ENCODE measurements at regions of chr6 and their contacts with region 1.

Region 1: DNA sequence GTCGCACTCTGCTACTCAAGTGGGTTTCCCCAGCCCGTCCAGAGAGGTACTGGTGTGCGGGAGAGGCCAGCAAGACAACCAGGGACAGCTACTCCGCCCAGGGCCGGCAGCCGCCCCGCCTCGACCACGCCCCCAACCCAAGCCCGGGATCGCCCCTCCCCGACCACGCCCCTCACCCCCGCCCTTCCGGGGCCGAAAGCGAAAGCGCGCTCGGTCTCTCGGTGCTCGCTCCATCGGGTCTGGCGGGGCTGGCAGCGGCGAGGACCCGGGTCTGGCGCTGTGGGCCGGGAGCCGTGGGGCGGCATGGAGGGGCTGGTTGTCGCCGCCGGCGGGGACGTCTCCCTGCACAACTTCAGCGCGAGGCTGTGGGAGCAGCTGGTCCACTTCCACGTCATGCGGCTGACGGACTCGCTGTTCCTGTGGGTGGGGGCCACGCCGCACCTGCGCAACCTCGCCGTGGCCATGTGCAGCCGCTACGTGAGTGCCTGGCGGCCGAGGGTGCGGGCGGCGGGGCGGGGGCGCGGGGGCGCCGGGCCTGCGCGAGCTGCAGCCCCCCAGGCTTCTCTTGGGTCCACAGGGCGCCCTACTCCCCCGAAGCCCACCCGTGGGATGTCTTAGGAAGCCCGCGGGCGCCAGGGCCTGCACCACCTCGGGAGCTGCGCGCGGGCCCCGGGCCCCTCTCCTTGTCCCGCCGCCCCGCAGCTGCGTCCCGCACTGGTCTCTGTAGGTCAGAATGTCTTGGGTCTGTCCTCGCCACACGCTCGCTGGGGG is at the start of gene PSMG4:
- DNase-seq: peak; percentile 73 to 84
- ATAC-seq: peak; percentile 85 to 93
- H3K4me3 ChIP-seq: peak within 1 kb of the TSS; percentile 92
- H3K27ac ChIP-seq: peak within 1 kb of the TSS; percentile 91 to 99
- H3K4me1 ChIP-seq: peaks cover 11% of the 10 kb centered on the region
- CTCF ChIP-seq: no peak
- EP300 ChIP-seq: no peak
- POLR2A ChIP-seq: peak; percentile 60
- RAD21 ChIP-seq: no peak
- polyA plus RNA-seq, gene PSMG4: 12.9 and 15.0 TPM in 2 replicates

Region 2: DNA sequence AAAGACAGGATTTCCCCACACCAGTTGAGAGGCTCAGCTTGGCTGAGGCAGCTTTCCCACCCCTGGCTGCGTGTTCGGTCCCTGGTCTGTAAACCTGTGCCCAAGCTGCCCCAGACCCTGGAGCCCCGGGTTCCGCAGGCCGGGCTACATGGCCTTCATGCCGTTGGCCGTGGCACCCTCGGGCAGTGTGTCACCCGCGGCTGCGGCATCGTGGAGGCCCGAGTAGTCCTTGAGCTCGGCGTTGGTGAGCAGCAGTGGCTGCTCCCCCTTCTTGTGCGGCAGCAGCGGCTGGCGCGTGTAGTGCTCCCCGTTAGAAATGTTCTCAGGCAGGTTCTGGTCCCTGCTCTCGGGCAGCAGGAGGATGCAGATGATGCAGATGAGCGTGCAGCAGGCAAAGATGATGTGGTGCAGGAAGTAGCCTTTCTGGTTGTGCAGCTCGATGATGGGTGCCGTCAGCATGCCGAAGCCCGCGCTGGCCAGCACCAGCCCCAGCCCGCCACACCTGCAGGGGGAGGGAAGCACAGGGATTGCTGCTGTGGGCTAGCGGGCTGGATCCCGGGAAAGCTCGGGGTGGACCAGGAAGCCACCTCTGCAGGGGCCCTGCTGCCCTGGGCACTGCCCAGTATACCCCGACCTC is 14.1 kb after region 1 on chr6:
- CTCF ChIA-PET with region 1: no interaction called
- POLR2A ChIA-PET with region 1: interaction called, 10 read pairs
- DNase-seq: no peak
- ATAC-seq: no peak
- H3K4me3 ChIP-seq: no peak overlapping the region
- H3K27ac ChIP-seq: no peak overlapping the region
- H3K4me1 ChIP-seq: no peaks in the 10 kb centered on the region
- CTCF ChIP-seq: no peak
- EP300 ChIP-seq: no peak
- POLR2A ChIP-seq: no peak
- RAD21 ChIP-seq: no peak